ENCODE measurements at regions of chr1 and their contacts with region 1.

Region 1: DNA sequence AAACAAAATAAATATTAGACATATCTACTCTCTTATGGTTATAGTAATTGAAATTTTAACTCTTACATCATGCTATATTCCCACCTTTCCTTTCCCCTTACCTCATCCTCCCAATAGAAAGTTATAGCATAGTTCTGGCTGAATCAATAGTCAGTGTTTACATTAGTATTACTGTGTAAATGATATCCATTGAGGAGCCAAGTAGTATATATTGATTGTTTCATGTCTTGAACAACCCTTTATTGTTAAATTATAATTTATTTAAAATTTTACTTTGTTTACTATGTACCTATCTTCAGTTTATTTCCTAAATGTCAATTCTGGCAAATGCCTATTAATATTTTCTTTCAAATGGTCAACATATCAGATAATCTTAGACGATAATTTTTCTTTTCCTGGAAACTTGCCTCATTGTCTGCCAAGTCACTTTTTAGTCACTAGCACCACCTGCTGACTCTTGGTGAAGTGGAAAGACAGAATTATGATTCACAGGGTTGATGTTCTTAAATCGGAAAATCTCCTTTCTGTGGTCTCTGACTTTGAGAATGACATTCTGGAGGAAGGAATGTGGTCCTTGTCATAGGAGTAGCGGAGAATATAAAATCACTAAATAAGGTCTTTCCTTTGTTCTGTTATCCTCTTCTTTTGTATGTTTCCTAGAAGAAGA is 8.7 kb downstream of the HJV start:
- DNase-seq: no peak
- H3K4me3 ChIP-seq: no peak overlapping the region
- CTCF ChIP-seq: no peak
- POLR2A ChIP-seq: no peak

Region 2: GRCh38 chr1:145845514-145846161 is 167.2 kb before region 1 on chr1 and contains the start of gene NUDT17:
- intact Hi-C with region 1: loop called (anchors 5 kb)
- DNase-seq: peak; percentile 67 to 95
- H3K4me3 ChIP-seq: peak within 1 kb of the TSS; percentile 39
- CTCF ChIP-seq: peak in 1 of 3 donors; percentile 82
- POLR2A ChIP-seq: no peak
- total RNA-seq, gene NUDT17: 0.25 to 5.0 (median 2.5) TPM

Region 3: DNA sequence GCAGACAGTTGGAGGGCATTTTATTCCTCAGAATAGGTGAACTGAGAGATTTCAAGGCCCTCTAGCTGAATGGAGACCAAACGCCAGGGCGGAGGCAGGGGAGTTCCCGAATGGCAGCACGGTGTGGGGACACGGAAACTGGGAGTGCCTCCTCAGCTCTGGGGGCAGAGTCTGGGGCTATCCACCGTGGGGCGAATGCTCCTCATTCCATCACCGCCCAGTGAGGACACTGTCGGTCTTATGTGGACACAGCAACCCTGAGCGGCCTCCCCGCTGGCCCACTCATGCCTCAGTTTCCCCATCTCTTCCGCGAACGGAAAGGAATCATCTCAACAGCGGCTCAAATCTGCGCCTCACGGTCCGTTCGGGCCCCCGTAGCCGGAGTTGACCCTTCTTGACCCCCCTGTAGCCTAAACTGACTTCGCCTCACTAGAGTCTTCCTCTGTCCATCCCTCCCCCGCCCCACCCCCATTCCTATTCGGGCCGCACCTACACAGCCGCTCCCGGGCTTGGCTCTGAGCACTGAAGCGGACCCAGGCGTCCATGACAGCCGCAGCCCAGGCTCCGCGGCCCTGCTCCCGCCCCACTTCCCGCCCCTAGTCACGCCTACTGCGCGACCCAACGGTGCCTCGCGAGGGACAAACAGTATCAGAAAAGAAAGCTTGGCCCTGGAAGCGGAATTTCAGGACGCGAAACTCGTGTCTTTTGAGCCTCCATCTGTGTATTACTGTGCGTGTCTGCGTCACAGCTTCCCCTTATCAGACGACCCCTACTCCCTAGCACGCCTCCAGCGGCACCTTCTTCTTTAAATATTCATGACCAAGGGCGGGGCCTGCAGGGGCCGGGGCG is 94.5 kb before region 1 on chr1 and contains the start of gene PEX11B:
- intact Hi-C with region 1: loop called (anchors 10 kb)
- DNase-seq: peak; percentile 90 to 98
- H3K4me3 ChIP-seq: peak within 1 kb of the TSS; percentile 52
- CTCF ChIP-seq: no peak
- POLR2A ChIP-seq: peak in 1 of 2 donors; percentile 34
- total RNA-seq, gene PEX11B: 27.0 to 47.1 (median 30.2) TPM

Region 4: GRCh38 chr1:145955436-145955835 is 57.4 kb before region 1 on chr1:
- intact Hi-C with region 1: no loop called
- DNase-seq: no peak
- H3K4me3 ChIP-seq: no peak overlapping the region
- CTCF ChIP-seq: no peak
- POLR2A ChIP-seq: no peak

Measured in lower leg skin (tissue), 4 donors.